PC-3 (cell line): ENCODE measurements at regions of chr12 and their contacts with region 1.

Region 1: GRCh38 chr12:99810718-99811593 is 163.4 kb downstream of the GARIN6 start:
- DNase-seq: peak; percentile 67
- ATAC-seq: peak; percentile 90
- H3K4me3 ChIP-seq: no peak overlapping the region
- H3K27ac ChIP-seq: no peak overlapping the region
- H3K4me1 ChIP-seq: no peaks in the 10 kb centered on the region
- H3K27me3 ChIP-seq: peaks cover 42% of the 10 kb centered on the region
- CTCF ChIP-seq: peak; percentile 53

Region 2: DNA sequence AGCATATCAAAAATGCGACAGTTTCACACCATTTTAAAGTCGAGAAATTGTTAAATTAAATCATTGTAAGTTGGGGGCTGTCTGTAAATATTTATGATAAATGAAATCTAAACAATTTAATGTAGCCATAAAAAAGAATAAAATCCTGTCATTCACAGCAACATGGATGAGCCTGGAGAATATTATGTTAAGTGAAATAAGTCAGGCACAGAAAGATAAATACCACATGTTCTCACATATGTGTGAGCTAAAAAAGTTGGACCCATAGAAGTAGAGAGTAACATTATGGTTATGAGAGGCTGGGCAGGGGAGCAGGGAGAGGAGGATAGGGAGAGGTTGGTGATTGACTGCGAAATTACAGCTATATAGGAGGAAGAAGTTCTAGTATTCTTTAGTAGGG is 27.5 kb before region 1 on chr12:
- CTCF ChIA-PET with region 1: no interaction called
- POLR2A ChIA-PET with region 1: no interaction called
- intact Hi-C with region 1: no loop called
- DNase-seq: no peak
- ATAC-seq: no peak
- H3K4me3 ChIP-seq: no peak overlapping the region
- H3K27ac ChIP-seq: no peak overlapping the region
- H3K4me1 ChIP-seq: no peaks in the 10 kb centered on the region
- H3K27me3 ChIP-seq: peaks cover 19% of the 10 kb centered on the region; the same call in 1 of the 2 replicates
- CTCF ChIP-seq: no peak

Region 3: DNA sequence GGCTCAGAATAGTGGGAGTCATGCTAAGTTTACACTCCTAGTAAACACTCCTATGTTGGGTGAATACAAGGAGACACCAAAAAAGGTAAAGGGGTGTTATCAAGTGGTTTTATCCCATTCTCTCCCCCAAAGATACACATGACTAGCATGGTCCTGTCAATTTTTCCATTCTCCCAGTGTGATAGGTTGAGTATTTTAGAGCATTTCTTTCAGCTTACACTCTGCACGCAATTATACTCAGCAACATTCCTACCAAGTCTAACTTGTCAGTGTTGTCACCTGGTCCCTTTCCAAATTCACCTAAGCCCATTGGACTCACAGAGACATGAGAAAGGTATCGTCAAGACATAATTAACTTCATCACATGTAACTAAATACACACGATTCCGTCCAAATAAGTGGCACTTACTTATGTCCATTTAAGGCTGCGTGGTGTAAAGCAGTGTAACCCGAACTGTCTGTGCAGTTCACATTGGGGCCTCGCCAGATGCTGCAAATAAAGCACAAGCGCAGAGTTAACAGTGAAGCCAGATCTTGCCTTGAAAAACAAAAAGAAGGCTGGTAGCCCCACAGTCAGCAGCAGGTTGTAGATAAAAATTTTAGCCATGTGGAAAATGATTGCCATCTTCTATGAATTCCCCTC is 14.1 kb after region 1 on chr12:
- CTCF ChIA-PET with region 1: no interaction called
- POLR2A ChIA-PET with region 1: no interaction called
- intact Hi-C with region 1: no loop called
- DNase-seq: no peak
- ATAC-seq: no peak
- H3K4me3 ChIP-seq: no peak overlapping the region
- H3K27ac ChIP-seq: no peak overlapping the region
- H3K4me1 ChIP-seq: no peaks in the 10 kb centered on the region
- H3K27me3 ChIP-seq: peaks cover 17% of the 10 kb centered on the region; the same call in 1 of the 2 replicates
- CTCF ChIP-seq: no peak

Region 4: DNA sequence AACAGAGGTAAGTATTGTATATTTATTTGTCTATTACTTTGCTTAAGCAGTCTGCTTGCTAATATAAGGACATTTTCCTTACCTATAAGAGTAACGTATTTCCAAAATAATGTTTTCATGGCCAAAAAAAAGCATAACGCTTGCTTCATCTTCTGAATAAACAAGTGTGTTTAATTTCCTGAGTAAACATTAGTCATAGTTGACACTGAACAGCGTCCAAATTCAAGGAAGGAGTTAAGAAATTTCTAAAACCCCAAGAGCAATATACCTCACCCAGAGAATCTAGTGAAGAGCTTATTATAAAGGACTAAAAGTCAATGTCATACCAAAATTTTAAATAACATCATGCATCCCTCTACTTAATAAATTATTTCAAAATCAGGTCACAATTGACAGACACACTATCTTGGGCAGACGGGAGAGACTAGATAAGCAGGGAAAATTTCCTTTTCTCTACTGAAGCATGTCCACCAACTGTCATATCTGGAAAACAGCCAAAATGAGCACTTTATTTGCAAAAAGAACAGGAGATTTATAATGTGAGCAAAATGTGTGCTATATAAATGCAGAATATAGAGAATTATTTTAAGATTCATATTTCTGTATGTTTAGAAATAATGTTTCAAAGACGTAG is 148.7 kb after region 1 on chr12:
- CTCF ChIA-PET with region 1: interaction called, 7 read pairs
- POLR2A ChIA-PET with region 1: no interaction called
- intact Hi-C with region 1: loop called (anchors 1 kb)
- DNase-seq: peak; percentile 95
- ATAC-seq: peak; percentile 85
- H3K4me3 ChIP-seq: 0 out of 2 replicates have a peak overlapping the region, but pooled peaks have one; percentile 12
- H3K27ac ChIP-seq: peak overlapping the region; percentile 40
- H3K4me1 ChIP-seq: peaks cover 18% of the 10 kb centered on the region
- H3K27me3 ChIP-seq: peaks cover 14% of the 10 kb centered on the region; the same call in 1 of the 2 replicates
- CTCF ChIP-seq: no peak

Region 5: GRCh38 chr12:100020370-100020769 is 209.4 kb after region 1 on chr12:
- CTCF ChIA-PET with region 1: no interaction called
- POLR2A ChIA-PET with region 1: no interaction called
- intact Hi-C with region 1: loop called (anchors 5 kb)
- DNase-seq: peak; percentile 28
- ATAC-seq: peak; percentile 49; the same call in 1 of the 2 replicates
- H3K4me3 ChIP-seq: no peak overlapping the region
- H3K27ac ChIP-seq: no peak overlapping the region
- H3K4me1 ChIP-seq: no peaks in the 10 kb centered on the region
- H3K27me3 ChIP-seq: no peaks in the 10 kb centered on the region
- CTCF ChIP-seq: no peak

Region 6: DNA sequence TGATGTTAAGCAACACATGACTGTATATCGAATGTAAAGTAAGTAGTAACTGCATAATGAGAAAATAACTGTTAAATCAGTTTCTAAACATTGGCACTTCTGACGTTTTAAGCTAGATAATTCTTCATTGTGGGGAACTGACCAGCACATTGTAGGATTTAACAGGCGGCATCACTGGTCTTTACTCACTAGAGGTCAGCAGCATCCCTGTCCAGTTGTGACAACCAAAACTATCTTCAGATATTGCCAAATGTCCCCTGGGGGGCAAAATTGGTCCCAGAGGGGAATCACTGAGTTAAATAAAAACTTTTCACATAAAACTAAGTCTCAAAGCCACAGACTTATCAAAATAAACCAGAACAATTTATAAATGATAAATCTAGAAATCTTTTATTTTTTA is 266.4 kb after region 1 on chr12:
- CTCF ChIA-PET with region 1: no interaction called
- POLR2A ChIA-PET with region 1: no interaction called
- intact Hi-C with region 1: loop called (anchors 5 kb)
- DNase-seq: peak; percentile 10
- ATAC-seq: peak; percentile 72
- H3K4me3 ChIP-seq: no peak overlapping the region
- H3K27ac ChIP-seq: no peak overlapping the region
- H3K4me1 ChIP-seq: peaks cover 7% of the 10 kb centered on the region; the same call in 1 of the 2 replicates
- H3K27me3 ChIP-seq: no peaks in the 10 kb centered on the region
- CTCF ChIP-seq: peak; percentile 48

Region 7: GRCh38 chr12:100200463-100201181 is 389.7 kb after region 1 on chr12 and contains the start of gene ACTR6:
- CTCF ChIA-PET with region 1: no interaction called
- POLR2A ChIA-PET with region 1: no interaction called
- intact Hi-C with region 1: loop called (anchors 1 kb)
- DNase-seq: peak; percentile 99
- ATAC-seq: peak; percentile 81
- H3K4me3 ChIP-seq: peak within 1 kb of the TSS; percentile 85
- H3K27ac ChIP-seq: peak within 1 kb of the TSS; percentile 33
- H3K4me1 ChIP-seq: peaks cover 36% of the 10 kb centered on the region
- H3K27me3 ChIP-seq: no peaks in the 10 kb centered on the region
- CTCF ChIP-seq: no peak
- total RNA-seq, gene ACTR6: 18.4 and 21.2 TPM in 2 replicates

Region 8: GRCh38 chr12:100554608-100555077 is 743.7 kb after region 1 on chr12:
- CTCF ChIA-PET with region 1: no interaction called
- POLR2A ChIA-PET with region 1: no interaction called
- intact Hi-C with region 1: loop called (anchors 1 kb)
- DNase-seq: peak; percentile 92
- ATAC-seq: peak; percentile 88
- H3K4me3 ChIP-seq: no peak overlapping the region
- H3K27ac ChIP-seq: no peak overlapping the region
- H3K4me1 ChIP-seq: no peaks in the 10 kb centered on the region
- H3K27me3 ChIP-seq: 0 out of 2 replicates have a peak, but pooled peaks cover 6% of the 10 kb centered on the region
- CTCF ChIP-seq: peak; percentile 98